ENCODE measurements at regions of chr20 and their contacts with region 1.

Region 1: DNA sequence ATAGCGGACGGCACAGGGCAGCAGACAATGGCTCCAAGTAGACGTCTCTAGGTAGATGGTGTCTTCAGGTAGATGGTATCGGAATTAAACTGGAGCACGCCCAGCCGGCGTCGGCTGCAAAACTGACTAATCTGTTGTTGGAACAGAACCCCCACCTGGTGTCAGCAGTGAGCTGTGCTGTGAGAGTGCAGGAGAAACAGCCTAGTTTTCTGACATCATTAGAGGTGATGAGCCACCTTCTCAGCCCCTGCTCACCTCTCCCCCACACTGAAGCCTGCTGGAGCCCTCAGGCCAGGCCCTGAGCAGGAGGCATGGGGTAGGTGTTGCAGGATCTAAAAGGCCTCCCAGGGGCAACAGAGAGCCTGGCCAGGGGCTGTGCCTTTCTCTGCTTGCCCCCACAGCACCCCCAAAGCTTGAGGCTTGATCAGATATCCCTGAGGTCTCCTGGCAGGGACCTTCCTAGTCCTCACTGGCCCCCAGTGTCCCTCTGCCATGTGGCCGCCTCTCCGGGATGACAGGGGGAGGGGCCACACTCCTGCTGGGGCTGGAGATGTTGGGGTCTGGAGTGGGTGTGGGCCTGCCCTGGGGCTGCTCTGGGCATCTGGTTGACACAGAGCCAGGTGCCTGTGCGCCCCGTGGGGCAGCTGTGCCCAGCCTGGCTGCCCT is 6.9 kb upstream of the HELZ2 start:
- DNase-seq: peak; percentile 56

Region 2: DNA sequence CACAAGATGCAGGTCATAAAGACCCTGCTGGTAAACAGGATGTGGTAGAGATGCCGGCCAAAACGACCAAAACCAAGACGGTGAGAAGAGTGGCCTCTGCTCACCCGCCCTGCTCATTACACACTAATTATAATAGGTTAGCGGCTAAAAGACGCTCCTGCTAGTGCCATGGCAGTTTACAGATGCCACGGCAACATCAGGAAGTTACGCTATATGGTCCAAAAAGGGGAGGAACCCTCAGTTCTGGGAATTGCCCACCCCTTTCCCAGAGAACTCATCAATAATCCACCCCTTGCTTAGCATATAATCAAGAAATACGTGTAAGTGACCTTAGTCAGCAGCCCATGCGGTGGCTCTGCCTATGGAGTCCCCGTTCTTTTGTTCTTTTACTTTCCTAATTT is 591.7 kb before region 1 on chr20:
- in situ Hi-C with region 1: no loop called
- DNase-seq: no peak

Region 3: DNA sequence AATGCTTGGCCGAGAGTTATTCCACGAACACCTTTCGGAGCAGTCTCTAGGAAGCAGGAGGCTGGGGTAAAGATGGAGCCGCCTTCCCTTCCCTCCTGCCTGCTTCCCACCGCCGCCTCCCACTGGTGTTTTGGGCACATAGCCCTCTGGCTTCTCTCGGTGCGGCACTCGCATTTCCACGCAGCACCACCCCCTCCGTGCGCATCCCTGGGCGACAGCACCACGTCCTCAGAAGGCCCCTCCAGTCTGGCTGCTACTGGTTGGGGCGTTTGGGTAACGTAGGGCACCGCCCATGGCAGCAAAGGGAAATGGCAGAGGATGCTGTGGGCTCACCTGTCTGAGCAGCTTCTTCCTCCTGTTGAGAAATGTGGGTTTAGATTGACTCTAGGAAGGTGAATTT is 285.5 kb before region 1 on chr20:
- in situ Hi-C with region 1: no loop called
- DNase-seq: no peak

Region 4: DNA sequence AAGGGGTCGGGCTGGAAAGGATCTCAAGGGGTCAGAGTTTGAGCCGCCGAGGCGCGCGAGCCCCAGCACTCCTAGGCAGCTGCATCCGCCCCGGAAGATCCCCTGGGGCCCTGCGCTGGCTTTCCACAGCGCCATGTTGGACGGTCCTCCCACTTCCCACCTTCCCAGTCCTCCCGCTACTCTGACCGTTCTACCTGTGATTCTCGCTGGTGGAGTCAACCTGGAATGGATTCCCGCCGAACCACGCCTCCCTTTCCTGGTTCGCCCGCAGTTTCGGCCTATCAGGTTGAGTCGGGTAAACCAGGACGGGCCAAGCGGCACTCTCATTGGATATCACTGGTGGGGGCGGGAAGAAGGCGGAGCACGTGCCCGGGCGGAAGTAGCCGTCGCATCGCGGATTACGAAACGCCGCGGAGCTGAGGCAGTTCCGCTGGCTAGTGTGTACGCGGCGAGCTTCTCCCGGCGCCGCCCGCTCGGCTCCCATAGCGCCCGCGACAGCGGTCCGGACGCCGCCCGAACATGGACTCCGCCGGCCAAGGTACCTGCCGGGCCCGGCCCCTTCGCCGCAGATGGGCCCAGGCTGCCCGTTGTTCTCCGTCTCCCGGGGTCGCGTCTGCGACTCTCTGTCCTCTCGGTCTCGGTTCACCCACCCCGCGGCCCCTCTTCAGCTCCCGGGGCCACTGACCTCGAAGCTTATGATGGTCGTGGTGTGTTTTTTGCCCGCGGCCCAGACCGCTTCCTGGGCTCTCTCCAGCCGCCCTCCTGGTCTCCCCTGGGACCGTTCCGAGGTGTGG is 284.1 kb after region 1 on chr20 and contains the start of gene TPD52L2:
- in situ Hi-C with region 1: loop called (anchors 25 kb)
- DNase-seq: peak; percentile 97

Measured in ACHN (cell line).